ENCODE measurements at regions of chr10 and their contacts with region 1.

Region 1: GRCh38 chr10:11036407-11037011 is 18.8 kb downstream of the CELF2 start:
- H3K4me3 Mint-ChIP-seq: no peak overlapping the region
- H3K27ac Mint-ChIP-seq: no peak overlapping the region
- H3K4me1 Mint-ChIP-seq: peaks cover 23% of the 10 kb centered on the region
- H3K27me3 Mint-ChIP-seq: peaks cover 8% of the 10 kb centered on the region

Region 2: DNA sequence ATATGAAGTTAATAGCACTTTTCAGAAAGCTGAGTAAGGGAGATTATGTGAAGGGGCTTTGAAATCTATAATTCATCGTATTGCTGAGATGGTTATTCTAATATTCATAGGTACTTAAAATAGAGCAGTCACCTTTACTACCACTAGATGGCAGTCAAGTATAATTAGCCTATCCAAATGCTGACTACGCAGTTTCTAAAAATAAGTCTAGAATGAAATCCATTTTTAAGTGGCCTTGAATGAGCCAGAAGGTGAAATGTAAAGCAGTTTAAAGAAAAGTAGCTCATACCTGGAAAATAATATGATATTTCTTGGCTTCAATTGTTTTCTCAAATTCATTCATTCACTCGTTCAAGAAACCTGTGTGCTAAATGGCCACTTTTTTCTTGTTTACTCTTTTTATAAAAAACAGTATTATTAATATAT is 1704.9 kb before region 1 on chr10:
- intact Hi-C with region 1: loop called (anchors 5 kb)
- H3K4me3 Mint-ChIP-seq: no peak overlapping the region
- H3K27ac Mint-ChIP-seq: no peak overlapping the region
- H3K4me1 Mint-ChIP-seq: no peaks in the 10 kb centered on the region
- H3K27me3 Mint-ChIP-seq: peaks cover 12% of the 10 kb centered on the region

Region 3: DNA sequence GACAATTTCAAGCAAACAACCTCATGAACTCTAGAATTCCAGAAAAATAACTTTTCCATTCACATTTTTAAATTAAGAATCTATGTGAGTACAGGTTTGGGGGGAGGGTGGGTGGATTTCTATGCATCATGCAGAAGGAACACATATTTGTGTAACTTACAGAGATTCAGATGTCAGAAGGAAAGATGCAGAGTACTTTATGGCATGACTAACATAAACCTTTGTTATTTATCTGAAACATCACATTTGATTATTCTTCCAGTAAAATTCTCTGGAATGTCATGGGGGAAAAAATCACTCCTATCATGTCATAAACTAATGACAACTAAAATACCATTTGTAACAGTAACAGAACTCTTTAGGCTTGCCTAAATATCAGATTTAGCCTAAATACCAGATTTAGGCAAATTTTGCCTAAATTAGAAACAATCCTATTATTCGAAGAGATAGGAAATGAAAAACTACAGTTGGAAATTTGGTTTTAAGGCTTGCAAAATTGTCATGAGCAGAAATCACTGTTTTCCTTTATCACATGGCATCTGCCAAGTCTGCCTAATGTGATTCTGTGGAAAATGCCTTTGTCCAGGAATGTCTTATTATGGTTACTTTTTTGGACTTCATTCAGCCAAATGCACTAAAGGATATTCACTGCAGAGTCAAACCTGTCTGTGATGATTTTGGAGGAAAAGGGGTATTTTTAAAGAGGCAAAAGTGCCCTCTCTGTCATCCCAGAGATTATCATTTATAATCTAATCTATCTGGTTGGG is 546.5 kb before region 1 on chr10:
- intact Hi-C with region 1: no loop called
- H3K4me3 Mint-ChIP-seq: no peak overlapping the region
- H3K27ac Mint-ChIP-seq: no peak overlapping the region
- H3K4me1 Mint-ChIP-seq: peaks cover 8% of the 10 kb centered on the region
- H3K27me3 Mint-ChIP-seq: peaks cover 2% of the 10 kb centered on the region

Region 4: GRCh38 chr10:11097686-11098085 is 61.2 kb after region 1 on chr10:
- intact Hi-C with region 1: no loop called
- H3K4me3 Mint-ChIP-seq: no peak overlapping the region
- H3K27ac Mint-ChIP-seq: no peak overlapping the region
- H3K4me1 Mint-ChIP-seq: no peaks in the 10 kb centered on the region
- H3K27me3 Mint-ChIP-seq: peaks cover 6% of the 10 kb centered on the region